Heart left ventricle (tissue), 16 donors: ENCODE measurements at regions of chr4 and their contacts with region 1.

Region 1: GRCh38 chr4:148441986-148442831 is at the start of gene NR3C2:
- DNase-seq: peak; percentile 99 to 100 (median 100)
- ATAC-seq: peak; percentile 90 to 97 (median 96)
- H3K4me3 ChIP-seq: peak within 1 kb of the TSS; percentile 87 to 99 (median 95)
- H3K27ac ChIP-seq: peak within 1 kb of the TSS; percentile 81 to 98 (median 90)
- H3K4me1 ChIP-seq: peaks cover 0 to 53% (median 36%) of the 10 kb centered on the region in 12 donors
- H3K27me3 ChIP-seq: peaks cover 0 to 25% (median 0%) of the 10 kb centered on the region in 9 donors
- CTCF ChIP-seq: no peak
- POLR2A ChIP-seq: peak; percentile 95 to 100
- total RNA-seq, gene NR3C2: 14.7 to 26.5 (median 20.0) TPM

Region 2: DNA sequence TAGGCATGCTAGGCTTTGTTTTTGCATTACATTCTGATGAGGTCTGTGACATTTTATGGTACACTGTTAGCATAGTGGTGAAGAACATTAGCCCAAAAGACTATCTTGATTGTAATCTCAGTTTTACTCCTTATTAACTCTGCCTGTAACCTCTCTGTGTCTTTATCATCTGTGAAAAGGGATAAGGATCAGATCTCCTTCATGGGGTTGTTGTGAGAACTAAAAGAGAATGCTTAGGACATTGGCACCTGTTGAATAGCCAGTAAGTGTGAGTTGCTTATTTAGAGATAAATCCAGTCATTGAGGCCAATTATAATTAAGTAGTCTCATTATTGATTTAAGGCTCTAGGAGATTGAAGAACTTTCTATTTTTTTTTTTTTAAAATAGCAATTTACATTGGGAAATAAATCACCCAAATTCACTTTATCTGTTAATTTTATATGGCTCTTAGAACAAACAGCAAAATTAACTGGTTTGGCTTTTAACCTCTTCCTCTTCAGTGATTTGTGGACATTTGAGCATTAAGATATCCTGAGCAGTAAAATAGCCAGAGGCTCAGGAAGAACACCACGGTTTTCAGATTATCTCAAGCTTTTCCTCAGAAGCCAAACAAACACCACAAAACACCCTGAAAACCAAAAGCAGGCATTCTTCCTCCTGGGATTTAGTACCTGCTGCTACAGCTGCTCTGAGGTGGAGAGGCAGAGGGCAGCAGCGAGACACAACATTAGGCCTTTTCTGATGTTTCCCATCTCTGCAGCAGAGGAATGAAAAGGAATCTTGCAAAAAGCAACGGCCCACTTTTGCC is 517.4 kb before region 1 on chr4:
- intact Hi-C with region 1: loop called in 1 of 10 experiments (anchors 5 kb)
- DNase-seq: peak in 1 of 5 donors; percentile 20
- ATAC-seq: no peak
- H3K4me3 ChIP-seq: no peak overlapping the region
- H3K27ac ChIP-seq: no peak overlapping the region
- H3K4me1 ChIP-seq: peaks cover 0 to 25% (median 4%) of the 10 kb centered on the region in 12 donors
- H3K27me3 ChIP-seq: no peaks in the 10 kb centered on the region
- CTCF ChIP-seq: peak in 10 of 12 donors; percentile 23 to 57 (median 43)
- POLR2A ChIP-seq: no peak

Region 3: GRCh38 chr4:148203056-148203898 is 238.9 kb before region 1 on chr4:
- intact Hi-C with region 1: loop called in 1 of 10 experiments (anchors 2 kb)
- DNase-seq: peak in 3 of 5 donors; percentile 49 to 55 (median 52)
- ATAC-seq: peak; percentile 88 to 96 (median 90)
- H3K4me3 ChIP-seq: peak overlapping the region in 7 of 12 donors; percentile 0 to 34 (median 17)
- H3K27ac ChIP-seq: peak overlapping the region; percentile 31 to 83 (median 69)
- H3K4me1 ChIP-seq: peaks cover 3 to 36% (median 24%) of the 10 kb centered on the region in 12 donors
- H3K27me3 ChIP-seq: no peaks in the 10 kb centered on the region
- CTCF ChIP-seq: no peak
- POLR2A ChIP-seq: no peak

Region 4: GRCh38 chr4:148225639-148226038 is 216.6 kb before region 1 on chr4:
- intact Hi-C with region 1: loop called in 1 of 10 experiments (anchors 10 kb)
- DNase-seq: no peak
- ATAC-seq: no peak
- H3K4me3 ChIP-seq: no peak overlapping the region
- H3K27ac ChIP-seq: no peak overlapping the region
- H3K4me1 ChIP-seq: peaks cover 0 to 40% (median 16%) of the 10 kb centered on the region in 12 donors
- H3K27me3 ChIP-seq: no peaks in the 10 kb centered on the region
- CTCF ChIP-seq: no peak
- POLR2A ChIP-seq: no peak

Region 5: GRCh38 chr4:148355442-148356123 is 86.6 kb before region 1 on chr4:
- intact Hi-C with region 1: loop called in 1 of 10 experiments (anchors 5 kb)
- DNase-seq: peak in 1 of 5 donors; percentile 34
- ATAC-seq: peak in 3 of 4 donors; percentile 34 to 60 (median 56)
- H3K4me3 ChIP-seq: peak overlapping the region in 2 of 12 donors; percentile 7 to 13
- H3K27ac ChIP-seq: peak overlapping the region in 9 of 12 donors; percentile 0 to 44 (median 23)
- H3K4me1 ChIP-seq: peaks cover 0 to 24% (median 10%) of the 10 kb centered on the region in 12 donors
- H3K27me3 ChIP-seq: no peaks in the 10 kb centered on the region
- CTCF ChIP-seq: no peak
- POLR2A ChIP-seq: no peak

Region 6: DNA sequence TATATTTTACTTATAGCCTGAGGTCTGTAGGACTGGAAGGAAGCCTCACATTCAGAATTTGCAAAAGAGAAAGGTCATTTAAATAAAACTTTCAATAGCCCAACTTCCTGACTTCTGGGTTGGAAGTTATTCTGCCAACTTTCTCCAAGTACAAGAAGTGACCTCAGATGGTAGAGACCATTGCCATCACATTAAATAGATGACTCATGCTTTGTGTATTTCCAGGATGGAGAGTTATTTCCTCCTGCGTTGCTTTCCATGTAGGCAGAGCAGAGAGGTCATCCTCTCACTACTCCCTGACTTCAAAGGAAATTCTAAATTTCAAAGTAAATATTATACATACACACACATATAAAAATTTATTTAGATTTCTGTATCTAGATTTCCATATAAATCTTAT is 73.0 kb after region 1 on chr4:
- intact Hi-C with region 1: loop called in 1 of 10 experiments (anchors 2 kb)
- DNase-seq: no peak
- ATAC-seq: peak in 3 of 4 donors; percentile 72 to 90 (median 77)
- H3K4me3 ChIP-seq: no peak overlapping the region
- H3K27ac ChIP-seq: peak overlapping the region in 4 of 12 donors; percentile 15 to 44 (median 31)
- H3K4me1 ChIP-seq: peaks cover 0 to 15% (median 0%) of the 10 kb centered on the region in 12 donors
- H3K27me3 ChIP-seq: no peaks in the 10 kb centered on the region
- CTCF ChIP-seq: no peak
- POLR2A ChIP-seq: no peak

Region 7: GRCh38 chr4:149161247-149161646 is 719.0 kb after region 1 on chr4:
- intact Hi-C with region 1: no loop called
- DNase-seq: peak in 2 of 5 donors; percentile 15 to 25
- ATAC-seq: peak; percentile 55 to 74 (median 60)
- H3K4me3 ChIP-seq: no peak overlapping the region
- H3K27ac ChIP-seq: peak overlapping the region in 1 of 12 donors; percentile 18
- H3K4me1 ChIP-seq: peaks cover 0 to 13% (median 0%) of the 10 kb centered on the region in 12 donors
- H3K27me3 ChIP-seq: no peaks in the 10 kb centered on the region
- CTCF ChIP-seq: no peak
- POLR2A ChIP-seq: no peak